IMR-90 (cell line): ENCODE measurements at regions of chr7 and their contacts with region 1.

Region 1: GRCh38 chr7:66790196-66790595 is 49.7 kb downstream of the RABGEF1 start:
- DNase-seq: no peak
- ATAC-seq: no peak
- H3K4me3 ChIP-seq: no peak overlapping the region
- H3K27ac ChIP-seq: no peak overlapping the region
- H3K4me1 ChIP-seq: no peaks in the 10 kb centered on the region
- H3K27me3 ChIP-seq: no peaks in the 10 kb centered on the region
- CTCF ChIP-seq: no peak
- POLR2A ChIP-seq: no peak
- RAD21 ChIP-seq: no peak

Region 2: GRCh38 chr7:66731986-66732385 is 58.2 kb before region 1 on chr7:
- CTCF ChIA-PET with region 1: no interaction called
- POLR2A ChIA-PET with region 1: no interaction called
- dilution Hi-C with region 1: no loop called
- in situ Hi-C with region 1: no loop called
- intact Hi-C with region 1: no loop called
- DNase-seq: no peak
- ATAC-seq: no peak; the same call in 1 of the 2 replicates
- H3K4me3 ChIP-seq: no peak overlapping the region
- H3K27ac ChIP-seq: no peak overlapping the region
- H3K4me1 ChIP-seq: no peaks in the 10 kb centered on the region
- H3K27me3 ChIP-seq: no peaks in the 10 kb centered on the region
- CTCF ChIP-seq: no peak
- POLR2A ChIP-seq: no peak
- RAD21 ChIP-seq: no peak

Region 3: GRCh38 chr7:66779669-66780409 is 10.4 kb before region 1 on chr7:
- CTCF ChIA-PET with region 1: no interaction called
- POLR2A ChIA-PET with region 1: no interaction called
- dilution Hi-C with region 1: no loop called
- in situ Hi-C with region 1: no loop called
- intact Hi-C with region 1: loop called (anchors 1 kb)
- DNase-seq: peak; percentile 56
- ATAC-seq: 0 out of 2 replicates have a peak, but pooled peaks have one; percentile 24
- H3K4me3 ChIP-seq: no peak overlapping the region
- H3K27ac ChIP-seq: peak overlapping the region; percentile 11; the same call in 1 of the 2 replicates
- H3K4me1 ChIP-seq: peaks cover 16% of the 10 kb centered on the region
- H3K27me3 ChIP-seq: no peaks in the 10 kb centered on the region
- CTCF ChIP-seq: no peak
- POLR2A ChIP-seq: no peak
- RAD21 ChIP-seq: no peak